BJ (cell line): ENCODE measurements at regions of chr11 and their contacts with region 1.

Region 1: DNA sequence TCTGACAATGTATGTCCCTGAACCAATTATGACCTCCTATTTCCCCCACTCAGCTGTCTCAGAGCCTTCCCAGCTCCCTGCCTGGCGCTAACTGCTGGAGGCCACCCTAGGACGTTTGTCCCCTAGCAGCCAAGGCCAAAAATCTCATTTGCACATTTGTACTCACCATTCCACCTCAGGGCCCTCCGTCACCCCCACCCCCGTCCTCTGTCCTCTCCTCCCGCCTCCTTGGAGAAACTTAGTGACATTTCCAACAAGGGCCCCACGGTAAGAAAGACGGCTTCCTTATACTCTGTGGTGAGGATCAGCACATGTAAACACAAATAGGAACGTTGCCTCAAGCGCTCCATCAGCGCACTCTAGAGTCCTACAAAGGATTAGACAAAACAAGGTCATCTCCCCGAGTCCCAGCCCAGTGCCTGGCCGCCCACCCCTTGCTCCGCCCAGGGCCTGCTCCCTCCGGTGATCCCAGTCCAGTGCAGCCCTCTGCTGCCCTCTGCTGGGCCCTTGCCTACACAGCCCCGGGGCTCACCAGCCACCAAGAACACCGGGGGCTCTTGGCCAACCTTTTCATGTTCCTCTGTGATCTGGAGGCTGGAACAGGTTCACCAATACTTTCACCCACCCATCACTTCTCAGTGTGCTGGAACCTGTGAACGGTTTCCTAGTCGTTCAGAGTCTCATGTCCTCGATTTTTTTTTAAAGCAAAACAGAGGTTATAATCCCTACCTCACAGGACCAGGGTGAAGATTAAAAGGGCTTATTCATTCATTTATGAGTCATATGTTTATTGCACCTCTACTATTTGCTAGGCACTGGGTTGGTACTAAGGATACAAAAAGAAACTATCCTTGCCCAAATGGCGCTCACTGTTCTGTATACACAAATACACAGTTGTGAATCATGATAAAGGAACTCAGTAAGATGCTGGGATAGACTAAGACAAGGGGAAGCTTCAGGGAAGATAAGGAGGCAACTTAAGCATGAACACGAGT is 15.3 kb upstream of the CTR9 start:
- DNase-seq: peak; percentile 82
- H3K4me3 ChIP-seq: peak overlapping the region; percentile 31; the same call in 1 of the 2 replicates
- H3K27me3 ChIP-seq: no peaks in the 10 kb centered on the region
- CTCF ChIP-seq: peak; percentile 99

Region 2: GRCh38 chr11:10405855-10406592 is 329.8 kb before region 1 on chr11:
- CTCF ChIA-PET with region 1: interaction called, 18 read pairs
- POLR2A ChIA-PET with region 1: no interaction called
- DNase-seq: no peak
- H3K4me3 ChIP-seq: no peak overlapping the region
- H3K27me3 ChIP-seq: no peaks in the 10 kb centered on the region
- CTCF ChIP-seq: peak; percentile 72

Region 3: DNA sequence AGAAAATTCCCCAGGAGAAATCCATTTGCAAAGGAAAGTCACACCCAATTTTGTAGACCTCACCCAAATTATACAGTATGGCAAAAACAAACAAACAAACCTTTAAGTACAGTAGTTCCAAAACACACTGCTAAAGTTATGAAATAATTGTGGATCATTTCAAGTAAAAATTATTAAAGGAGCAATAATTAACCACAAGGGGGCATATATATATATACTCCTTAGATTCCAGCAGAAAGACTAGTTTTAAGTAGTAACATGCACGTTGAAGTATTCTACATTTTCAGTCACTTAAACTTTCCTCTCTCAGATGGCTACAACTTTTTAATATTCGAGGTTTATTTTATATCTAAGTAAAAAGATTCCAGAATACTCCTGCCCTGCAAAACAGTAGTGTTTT is 221.6 kb before region 1 on chr11:
- CTCF ChIA-PET with region 1: interaction called, 12 read pairs
- POLR2A ChIA-PET with region 1: no interaction called
- DNase-seq: no peak
- H3K4me3 ChIP-seq: no peak overlapping the region
- H3K27me3 ChIP-seq: no peaks in the 10 kb centered on the region
- CTCF ChIP-seq: peak; percentile 22; the same call in 1 of the 2 replicates

Region 4: DNA sequence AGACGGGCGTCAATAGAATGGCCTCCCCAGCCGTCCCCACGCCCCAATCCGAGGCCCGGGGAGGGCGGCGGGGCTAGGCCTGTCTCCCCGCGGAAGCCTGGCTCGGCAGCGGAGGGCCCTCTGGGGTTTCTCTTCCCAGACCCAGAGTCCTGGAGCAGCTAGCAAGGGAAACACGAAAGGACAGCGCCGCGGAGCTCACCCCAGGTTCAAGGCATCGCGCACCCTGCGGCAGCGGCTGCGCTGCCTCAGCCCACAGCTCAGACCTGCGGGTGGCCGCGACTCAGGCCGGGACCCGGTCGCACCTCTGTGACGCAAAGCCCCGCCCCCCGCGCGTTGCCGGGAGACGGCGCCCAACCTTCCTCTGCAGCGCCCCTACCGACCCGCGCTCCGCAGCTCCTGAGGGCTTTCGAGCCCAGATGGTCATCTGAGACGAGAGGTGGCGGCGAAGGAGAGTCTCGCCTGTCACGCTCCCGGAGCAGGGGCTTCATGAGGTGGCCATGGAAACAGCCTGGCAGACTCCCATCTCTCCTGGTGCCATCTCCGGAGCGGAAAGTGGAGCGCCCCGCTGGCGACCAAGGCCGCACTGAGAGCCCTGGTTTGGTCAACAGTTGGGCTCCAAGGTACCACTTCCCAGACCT is 194.7 kb before region 1 on chr11 and contains the start of gene RNF141:
- CTCF ChIA-PET with region 1: interaction called, 13 read pairs
- POLR2A ChIA-PET with region 1: no interaction called
- DNase-seq: peak; percentile 42
- H3K4me3 ChIP-seq: peak within 1 kb of the TSS; percentile 79
- H3K27me3 ChIP-seq: no peaks in the 10 kb centered on the region
- CTCF ChIP-seq: peak; percentile 92
- polyA plus RNA-seq, gene RNF141: 12.1 and 27.5 TPM in 2 replicates

Region 5: GRCh38 chr11:10623797-10624761 is 111.7 kb before region 1 on chr11:
- CTCF ChIA-PET with region 1: interaction called, 11 read pairs
- POLR2A ChIA-PET with region 1: no interaction called
- DNase-seq: no peak
- H3K4me3 ChIP-seq: no peak overlapping the region
- H3K27me3 ChIP-seq: no peaks in the 10 kb centered on the region
- CTCF ChIP-seq: peak; percentile 55

Region 6: DNA sequence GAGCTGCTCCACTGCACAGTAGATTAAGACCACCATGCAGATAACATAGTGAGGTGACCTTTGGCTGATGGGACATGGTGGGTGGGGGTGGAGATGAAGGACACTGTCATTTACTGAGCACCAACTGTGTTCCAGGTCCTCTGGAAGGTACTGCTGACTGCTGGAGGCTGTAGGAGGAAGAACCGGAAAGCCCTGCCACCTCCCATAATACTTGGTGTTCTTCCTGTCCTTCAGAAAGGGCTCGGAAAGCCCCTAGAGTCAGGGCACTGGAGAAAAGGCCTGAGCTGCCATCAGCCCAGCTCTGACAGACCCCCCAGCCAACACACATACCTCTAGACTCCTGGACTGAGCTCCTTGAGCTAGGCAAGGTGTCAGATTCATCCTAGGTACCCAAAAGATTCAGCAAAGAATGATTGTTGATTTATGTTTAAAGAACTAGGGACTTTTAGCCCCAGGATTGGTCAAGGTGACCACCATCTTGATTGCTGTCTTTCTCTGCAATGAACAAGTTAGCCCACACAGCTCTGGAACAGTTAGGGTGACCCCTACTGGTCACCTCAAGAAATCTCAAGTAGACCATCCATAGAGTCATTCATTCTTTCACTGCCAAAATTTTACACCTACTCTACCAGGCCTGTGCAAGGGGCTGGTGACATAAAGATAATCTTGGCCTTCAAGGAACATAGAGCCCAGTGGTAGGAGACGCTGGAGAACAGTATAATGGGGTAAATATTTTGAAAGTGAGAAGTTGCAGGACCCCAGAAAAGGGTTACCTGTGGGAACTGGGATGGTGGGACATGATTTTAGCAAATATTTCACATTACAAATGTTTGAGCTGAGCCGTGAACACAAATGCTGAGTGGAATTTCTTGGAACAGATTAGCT is 81.6 kb before region 1 on chr11:
- CTCF ChIA-PET with region 1: interaction called, 18 read pairs
- POLR2A ChIA-PET with region 1: no interaction called
- DNase-seq: no peak
- H3K4me3 ChIP-seq: no peak overlapping the region
- H3K27me3 ChIP-seq: no peaks in the 10 kb centered on the region
- CTCF ChIP-seq: peak; percentile 60